Dorsolateral prefrontal cortex (tissue), 120 donors: ENCODE measurements at regions of chr19 and their contacts with region 1.

Region 1: DNA sequence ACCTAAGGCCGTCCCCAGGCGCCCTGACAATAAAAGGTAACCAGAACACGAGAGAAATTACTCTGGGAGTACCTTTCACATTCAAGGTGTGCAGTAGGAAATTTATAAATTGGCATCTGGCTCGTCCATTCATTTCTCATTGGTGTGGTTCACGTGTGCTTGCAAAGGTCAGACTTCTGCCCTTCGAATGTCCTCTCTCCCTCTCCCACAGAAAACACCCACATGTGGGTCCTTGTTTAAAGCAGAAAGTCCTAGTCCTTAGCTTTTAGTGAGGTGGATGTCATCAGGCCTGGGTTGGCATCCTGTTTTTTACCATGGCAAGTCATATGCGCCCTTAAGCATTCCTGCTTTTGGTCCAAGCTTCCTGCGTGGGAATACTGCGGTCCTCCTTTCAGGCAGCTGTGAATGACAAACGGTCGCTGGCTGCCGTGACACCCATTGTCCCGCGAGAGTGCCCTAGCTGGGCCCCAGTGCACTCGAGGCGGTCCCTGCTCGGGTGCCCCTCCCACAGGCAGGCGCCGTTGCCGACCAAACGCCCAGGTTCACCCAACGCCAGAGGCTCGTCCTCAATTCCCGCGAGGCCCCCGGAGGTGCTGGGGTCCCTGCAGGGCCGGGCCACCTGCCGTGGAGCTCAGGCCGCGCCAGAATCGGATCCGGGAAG is at the start of gene NUDT19:
- DNase-seq: peak; percentile 69 to 89 (median 84)
- H3K4me3 ChIP-seq: peak within 1 kb of the TSS; percentile 58 to 94 (median 80)
- H3K27ac ChIP-seq: peak within 1 kb of the TSS in 56 of 59 donors; percentile 26 to 92 (median 78)
- H3K27me3 ChIP-seq: no peaks in the 10 kb centered on the region
- CTCF ChIP-seq: peak in 16 of 56 donors; percentile 6 to 40 (median 22)
- total RNA-seq, gene NUDT19: 4.0 to 9.7 (median 6.3) TPM

Region 2: DNA sequence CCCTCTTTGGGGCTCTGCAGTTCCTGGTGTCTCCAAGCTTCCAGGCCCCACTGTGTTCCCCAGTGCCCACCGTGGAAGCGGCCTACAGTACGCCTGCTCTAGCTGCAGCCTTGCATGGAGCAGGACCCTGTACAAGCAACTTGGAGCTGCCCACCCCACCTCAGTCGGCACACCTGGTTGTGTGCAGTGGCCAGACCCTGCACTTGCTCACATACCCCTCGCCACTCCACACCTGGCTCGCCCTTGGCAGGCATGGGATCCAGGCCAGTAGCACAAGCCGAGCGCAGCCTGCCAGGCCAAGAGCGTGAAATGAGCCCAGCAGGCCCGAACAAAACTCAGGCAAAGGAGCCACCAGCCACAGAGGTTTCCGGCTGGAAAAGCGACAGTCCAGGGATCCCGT is 52.8 kb before region 1 on chr19:
- intact Hi-C with region 1: no loop called
- DNase-seq: no peak
- H3K4me3 ChIP-seq: no peak overlapping the region
- H3K27ac ChIP-seq: no peak overlapping the region
- H3K27me3 ChIP-seq: no peaks in the 10 kb centered on the region
- CTCF ChIP-seq: no peak

Region 3: GRCh38 chr19:33080761-33081681 is 389.6 kb after region 1 on chr19 and contains the start of gene GPATCH1:
- intact Hi-C with region 1: loop called in 1 of 2 experiments (anchors 5 kb)
- DNase-seq: peak; percentile 87 to 95 (median 92)
- H3K4me3 ChIP-seq: peak within 1 kb of the TSS; percentile 62 to 99 (median 94)
- H3K27ac ChIP-seq: peak within 1 kb of the TSS; percentile 6 to 96 (median 87)
- H3K27me3 ChIP-seq: no peaks in the 10 kb centered on the region
- CTCF ChIP-seq: peak in 40 of 56 donors; percentile 11 to 57 (median 34)
- total RNA-seq, gene GPATCH1: 9.0 to 18.2 (median 13.1) TPM